ENCODE measurements at regions of chr14 and their contacts with region 1.

Region 1: DNA sequence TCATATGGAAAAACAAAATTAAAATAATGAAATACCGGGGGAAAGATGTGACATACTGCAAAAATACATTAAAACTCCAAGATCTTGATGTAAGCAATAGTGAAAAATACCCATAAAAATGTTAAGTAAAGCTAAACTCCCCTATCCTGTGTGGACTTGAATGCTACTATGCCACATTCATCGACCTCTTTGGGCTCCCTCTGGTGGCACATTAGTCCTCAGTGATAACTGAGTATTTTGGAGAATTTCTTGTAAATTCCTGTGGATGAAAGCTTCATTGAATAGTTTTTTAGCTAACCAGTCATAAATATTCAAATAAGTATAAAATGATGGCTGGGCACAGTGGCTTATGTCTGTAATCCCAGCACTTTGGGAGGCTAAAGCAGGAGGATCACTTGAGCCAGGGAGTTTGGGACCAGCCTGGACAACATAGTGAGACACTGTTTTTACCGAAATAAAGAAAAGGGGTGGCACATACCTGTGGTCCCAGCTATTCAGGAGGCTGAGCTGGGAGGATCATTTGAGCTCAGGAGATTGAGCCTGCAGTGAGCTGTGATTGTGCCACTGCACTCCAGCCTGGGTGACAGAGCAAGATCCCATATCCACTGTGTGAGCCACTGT is 42.4 kb upstream of the SGPP1 start:
- DNase-seq: peak; percentile 65
- H3K4me3 Mint-ChIP-seq: no peak overlapping the region
- H3K27ac Mint-ChIP-seq: no peak overlapping the region
- H3K4me1 Mint-ChIP-seq: no peaks in the 10 kb centered on the region
- H3K27me3 Mint-ChIP-seq: no peaks in the 10 kb centered on the region
- CTCF ChIP-seq: peak; percentile 51

Region 2: DNA sequence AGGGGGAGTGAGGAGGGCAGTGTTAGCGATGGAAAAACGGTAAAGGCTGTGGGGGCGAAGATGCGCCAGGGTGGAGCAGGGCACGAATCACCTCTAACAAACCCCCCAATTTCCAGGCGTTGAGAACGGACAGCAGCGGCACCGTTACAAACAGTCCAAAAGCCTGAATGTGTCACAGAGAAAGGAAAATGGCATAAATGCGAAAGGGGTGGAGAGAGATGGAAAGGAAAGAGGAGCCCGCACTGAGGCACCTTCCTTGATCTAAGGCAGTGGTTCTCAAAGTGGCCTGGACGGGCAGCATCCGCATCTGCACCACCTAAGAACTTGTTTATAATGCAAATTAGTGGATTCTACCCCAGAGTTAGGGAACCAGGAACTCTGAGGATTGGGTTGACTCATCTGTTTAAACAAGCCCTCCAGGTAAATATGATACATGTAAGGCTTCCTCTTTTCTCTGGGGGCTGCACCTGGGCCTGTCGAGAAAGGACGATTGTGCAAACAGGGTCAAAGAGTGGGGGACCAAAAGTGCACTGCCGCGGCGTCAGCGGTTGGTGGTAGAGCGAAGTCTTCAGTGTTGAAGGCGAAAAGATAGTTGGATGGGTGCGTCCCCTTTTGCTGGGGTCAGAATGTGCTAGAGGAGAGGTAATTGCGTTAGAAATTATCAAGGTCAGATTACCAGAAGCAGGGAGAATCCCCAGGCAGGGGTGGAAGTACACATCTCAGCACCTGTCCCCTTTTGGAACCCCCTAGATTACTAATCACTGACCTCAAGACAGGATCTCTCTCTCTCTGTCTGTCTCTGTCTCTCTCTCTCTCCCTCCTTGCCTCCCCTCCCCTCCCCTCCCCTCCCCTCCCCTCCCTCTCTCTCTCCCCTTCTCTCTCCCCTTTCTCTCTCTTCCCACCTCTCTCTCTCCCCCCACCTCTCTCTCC is 723.7 kb before region 1 on chr14:
- CTCF ChIA-PET with region 1: no interaction called
- POLR2A ChIA-PET with region 1: no interaction called
- intact Hi-C with region 1: no loop called
- DNase-seq: no peak
- H3K4me3 Mint-ChIP-seq: no peak overlapping the region
- H3K27ac Mint-ChIP-seq: no peak overlapping the region
- H3K4me1 Mint-ChIP-seq: no peaks in the 10 kb centered on the region
- H3K27me3 Mint-ChIP-seq: peaks cover 24% of the 10 kb centered on the region
- CTCF ChIP-seq: no peak

Region 3: DNA sequence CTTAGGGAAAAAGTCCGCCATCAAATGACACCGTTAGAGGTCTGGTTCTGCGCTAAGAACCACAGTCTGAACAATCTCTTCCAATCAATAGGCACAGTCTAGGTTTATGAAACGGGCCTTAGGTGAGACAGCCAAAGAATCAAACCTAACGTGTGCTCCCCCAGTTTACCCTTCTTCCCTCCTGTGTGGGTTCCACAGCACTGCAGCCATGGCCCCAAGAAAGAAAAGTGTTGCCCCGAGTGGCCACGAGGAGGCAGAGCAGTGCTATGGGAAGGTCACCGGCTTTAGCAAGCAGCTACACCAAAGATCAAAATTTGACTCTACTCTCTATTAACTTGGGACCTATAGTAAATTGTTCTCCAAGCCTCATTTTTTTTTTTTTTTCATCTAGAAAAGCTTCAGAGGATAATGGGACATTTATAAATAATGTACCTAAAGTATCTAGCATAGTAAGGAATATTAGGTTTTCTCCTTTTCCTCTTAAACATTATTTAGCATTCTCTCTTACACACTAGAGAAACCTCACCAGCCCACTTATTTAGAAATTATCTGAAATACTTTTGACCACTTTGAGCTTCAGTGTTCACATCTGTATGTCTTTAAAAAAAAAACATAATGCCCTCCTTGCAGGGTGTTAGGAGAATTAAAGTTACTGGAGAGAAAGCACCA is 381.4 kb before region 1 on chr14:
- CTCF ChIA-PET with region 1: interaction called, 15 read pairs
- POLR2A ChIA-PET with region 1: interaction called, 4 read pairs
- intact Hi-C with region 1: no loop called
- DNase-seq: peak; percentile 66
- H3K4me3 Mint-ChIP-seq: no peak overlapping the region
- H3K27ac Mint-ChIP-seq: no peak overlapping the region
- H3K4me1 Mint-ChIP-seq: no peaks in the 10 kb centered on the region
- H3K27me3 Mint-ChIP-seq: no peaks in the 10 kb centered on the region
- CTCF ChIP-seq: peak; percentile 76

Region 4: DNA sequence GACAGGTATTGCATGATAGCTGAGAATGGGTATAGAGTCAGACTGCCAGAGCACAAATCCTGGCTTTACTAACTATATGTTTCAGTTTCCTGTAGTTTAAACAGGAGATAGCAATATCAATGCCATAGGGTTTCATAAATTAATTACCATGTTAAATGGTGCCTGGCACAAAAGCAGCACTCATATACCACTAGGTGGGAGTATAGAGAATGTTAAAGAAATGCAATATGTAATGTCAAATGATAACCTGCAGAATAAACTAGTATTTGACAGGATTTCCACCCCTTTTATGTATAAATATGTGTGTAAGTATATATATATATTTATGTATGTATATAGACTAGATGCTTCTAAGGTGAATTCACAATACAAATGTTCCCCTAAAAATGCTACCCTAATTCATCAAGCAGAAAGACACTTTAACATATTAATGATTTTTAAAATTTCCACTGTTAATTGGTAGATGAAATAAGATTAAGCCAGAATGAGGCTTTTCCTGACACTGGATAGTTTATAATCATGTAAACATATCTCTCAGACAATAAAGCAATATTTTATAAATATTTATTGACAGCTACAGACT is 137.3 kb before region 1 on chr14:
- CTCF ChIA-PET with region 1: interaction called, 60 read pairs
- POLR2A ChIA-PET with region 1: no interaction called
- intact Hi-C with region 1: loop called (anchors 1 kb)
- DNase-seq: peak; percentile 44
- H3K4me3 Mint-ChIP-seq: no peak overlapping the region
- H3K27ac Mint-ChIP-seq: no peak overlapping the region
- H3K4me1 Mint-ChIP-seq: peaks cover 10% of the 10 kb centered on the region
- H3K27me3 Mint-ChIP-seq: no peaks in the 10 kb centered on the region
- CTCF ChIP-seq: peak; percentile 46

Region 5: DNA sequence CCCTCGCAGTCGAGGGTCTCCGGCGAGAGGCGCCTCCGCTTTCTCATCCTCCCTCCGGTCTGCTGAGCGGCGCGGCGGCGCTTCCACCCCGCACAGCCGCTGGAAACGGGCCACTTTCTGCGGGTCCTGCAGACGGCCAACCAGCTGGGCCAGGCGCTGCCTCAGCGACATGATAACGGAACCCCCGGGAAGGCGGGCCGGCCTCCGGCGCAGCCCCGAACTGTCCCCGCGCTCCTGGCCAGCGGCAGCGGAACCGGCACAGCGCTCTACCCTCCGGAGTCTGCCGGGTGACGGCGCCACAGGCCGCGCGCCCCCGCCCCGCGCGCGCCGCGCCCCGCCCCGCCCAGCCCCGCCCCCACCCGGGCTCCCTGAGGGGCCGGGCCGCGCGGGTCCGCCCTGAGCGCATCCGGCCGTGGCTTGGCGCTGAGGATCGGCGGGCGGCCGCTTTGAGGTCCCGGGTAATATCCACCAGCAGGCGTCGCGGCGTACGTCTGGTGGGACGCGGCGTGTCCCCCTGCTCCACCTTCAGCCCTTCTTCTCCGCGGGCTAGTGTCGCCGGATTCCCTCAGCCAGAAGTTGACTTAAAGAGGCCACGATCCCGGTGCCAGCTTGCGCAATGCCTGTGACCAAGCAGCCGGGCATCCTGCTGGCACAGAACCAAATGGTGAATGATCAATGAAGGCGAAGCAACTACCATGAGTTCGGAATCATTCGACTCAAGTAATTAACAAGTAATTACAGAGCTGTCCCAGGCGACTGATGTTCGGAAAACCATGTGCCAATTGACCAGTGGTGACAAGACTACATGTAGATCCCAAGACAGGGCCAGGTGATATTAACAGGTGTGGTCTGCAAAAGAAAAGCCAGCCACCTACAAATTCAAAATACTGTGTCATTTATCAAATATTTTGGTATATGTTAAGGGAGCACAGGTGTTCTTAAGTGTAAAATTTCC is 42.2 kb before region 1 on chr14 and contains the start of gene SGPP1:
- CTCF ChIA-PET with region 1: interaction called, 10 read pairs
- POLR2A ChIA-PET with region 1: interaction called, 7 read pairs
- intact Hi-C with region 1: loop called (anchors 5 kb)
- DNase-seq: peak; percentile 76
- H3K4me3 Mint-ChIP-seq: peak within 1 kb of the TSS; percentile 99
- H3K27ac Mint-ChIP-seq: peak within 1 kb of the TSS; percentile 93
- H3K4me1 Mint-ChIP-seq: peaks cover 23% of the 10 kb centered on the region
- H3K27me3 Mint-ChIP-seq: no peaks in the 10 kb centered on the region
- CTCF ChIP-seq: peak; percentile 31
- total RNA-seq, gene SGPP1: 20.8 and 22.7 TPM in 2 replicates

Region 6: GRCh38 chr14:63993992-63994391 is 223.7 kb after region 1 on chr14:
- CTCF ChIA-PET with region 1: no interaction called
- POLR2A ChIA-PET with region 1: no interaction called
- intact Hi-C with region 1: no loop called
- DNase-seq: peak; percentile 18
- H3K4me3 Mint-ChIP-seq: no peak overlapping the region
- H3K27ac Mint-ChIP-seq: no peak overlapping the region
- H3K4me1 Mint-ChIP-seq: peaks cover 11% of the 10 kb centered on the region
- H3K27me3 Mint-ChIP-seq: no peaks in the 10 kb centered on the region
- CTCF ChIP-seq: peak; percentile 34